ENCODE measurements at regions of chr19 and their contacts with region 1.

Region 1: DNA sequence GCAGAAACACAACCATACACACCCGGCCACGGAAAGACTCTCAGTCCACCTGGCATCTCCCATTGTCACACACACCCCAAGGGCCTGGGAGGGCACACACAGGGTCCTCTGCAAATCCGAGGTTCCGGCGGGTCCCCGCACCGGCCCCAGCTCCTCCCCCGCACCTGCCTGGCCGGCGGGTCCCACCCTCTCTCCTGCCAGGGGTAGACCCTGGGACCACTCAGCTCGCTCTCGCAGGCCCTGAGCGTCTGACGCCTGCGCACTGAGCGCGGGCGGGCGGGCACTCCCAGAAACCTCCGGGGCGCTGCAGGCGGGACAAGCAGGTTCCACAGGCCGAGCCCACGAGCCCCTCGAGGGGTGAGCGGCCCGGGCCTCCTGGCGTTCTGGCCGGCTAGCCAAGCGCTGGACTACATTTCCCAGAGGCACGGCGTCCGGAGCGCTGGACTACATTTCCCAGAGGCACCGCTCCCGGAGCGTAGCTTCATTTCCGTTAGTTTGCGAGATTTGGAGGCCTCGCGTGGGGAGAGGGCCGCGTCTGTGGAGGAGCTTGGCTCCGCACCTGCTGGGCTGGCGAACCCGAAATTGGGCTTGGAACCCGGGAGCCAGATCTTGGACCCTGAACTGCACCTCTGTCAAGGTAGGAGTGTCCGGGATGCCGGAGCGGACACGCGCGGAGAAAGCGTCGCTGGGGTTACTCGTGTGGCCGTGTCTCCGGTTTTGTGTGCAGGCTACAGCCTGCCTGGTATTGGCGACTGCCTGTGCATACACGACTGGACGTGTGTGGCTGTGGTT is at the start of gene ZNF420:
- DNase-seq: peak; percentile 94 to 97 (median 96)
- ATAC-seq: peak; percentile 99
- H3K4me3 ChIP-seq: peak within 1 kb of the TSS; percentile 62 to 89 (median 78)
- H3K27ac ChIP-seq: peak within 1 kb of the TSS; percentile 45 to 93 (median 86)
- H3K4me1 ChIP-seq: peaks cover 0 to 28% (median 15%) of the 10 kb centered on the region in 12 donors
- H3K27me3 ChIP-seq: no peaks in the 10 kb centered on the region
- CTCF ChIP-seq: peak in 2 of 12 donors; percentile 11 to 14
- POLR2A ChIP-seq: peak in 1 of 2 donors; percentile 64
- total RNA-seq, gene ZNF420: 1.9 to 9.3 (median 7.8) TPM

Region 2: DNA sequence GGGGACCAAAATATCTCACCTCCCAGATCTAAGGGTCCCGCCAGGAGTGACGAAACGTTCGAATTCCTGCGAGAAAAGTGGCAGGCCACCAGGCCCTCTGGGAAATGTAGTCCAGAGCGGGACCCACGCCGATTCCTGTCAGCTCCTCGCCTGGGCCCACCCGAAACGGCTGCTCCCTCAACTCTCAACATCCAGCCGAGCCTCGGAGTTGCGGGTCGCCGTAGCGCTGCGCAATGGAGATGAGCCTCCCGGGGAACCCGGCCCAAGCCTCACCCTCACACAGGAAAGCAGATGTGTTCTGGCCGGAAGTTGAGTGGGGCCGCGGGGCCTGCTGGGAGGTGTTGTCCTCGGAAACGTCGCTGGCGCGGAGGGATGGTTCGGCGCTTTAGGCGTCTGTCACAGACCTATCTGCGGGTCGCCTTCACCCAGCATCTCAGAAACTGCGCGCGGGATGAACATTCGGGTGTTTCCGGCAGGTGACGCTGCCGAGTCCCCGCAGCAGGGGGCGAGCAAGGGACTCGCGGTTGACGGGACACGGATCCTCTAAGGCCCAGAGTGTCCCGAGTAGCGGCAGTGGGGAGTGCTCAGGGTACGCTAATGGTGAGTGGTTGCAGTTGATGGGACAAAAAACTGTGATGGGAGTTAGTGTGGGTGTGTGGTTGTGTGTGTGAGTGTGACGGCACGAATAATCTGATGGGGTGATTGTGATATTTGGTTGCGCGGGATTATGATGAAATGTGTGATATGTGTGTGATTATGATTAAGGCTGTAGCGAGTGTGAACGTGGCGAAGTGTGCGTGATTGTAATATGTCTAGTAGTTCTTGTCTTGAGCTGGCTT is 161.9 kb before region 1 on chr19 and contains the starts of genes ZNF568 and ZNF829:
- intact Hi-C with region 1: loop called in 1 of 10 experiments (anchors 5 kb)
- DNase-seq: peak; percentile 91 to 95 (median 93)
- ATAC-seq: peak; percentile 94 to 99 (median 98)
- H3K4me3 ChIP-seq: peak within 1 kb of the TSS; percentile 60 to 87 (median 80)
- H3K27ac ChIP-seq: peak within 1 kb of the TSS; percentile 80 to 98 (median 97)
- H3K4me1 ChIP-seq: peaks cover 0 to 18% (median 11%) of the 10 kb centered on the region in 12 donors
- H3K27me3 ChIP-seq: no peaks in the 10 kb centered on the region
- CTCF ChIP-seq: peak; percentile 44 to 85 (median 61)
- POLR2A ChIP-seq: no peak
- total RNA-seq, gene ZNF568: 6.6 to 12.1 (median 9.4) TPM
- total RNA-seq, gene ZNF829: 1.3 to 3.5 (median 2.5) TPM

Region 3: DNA sequence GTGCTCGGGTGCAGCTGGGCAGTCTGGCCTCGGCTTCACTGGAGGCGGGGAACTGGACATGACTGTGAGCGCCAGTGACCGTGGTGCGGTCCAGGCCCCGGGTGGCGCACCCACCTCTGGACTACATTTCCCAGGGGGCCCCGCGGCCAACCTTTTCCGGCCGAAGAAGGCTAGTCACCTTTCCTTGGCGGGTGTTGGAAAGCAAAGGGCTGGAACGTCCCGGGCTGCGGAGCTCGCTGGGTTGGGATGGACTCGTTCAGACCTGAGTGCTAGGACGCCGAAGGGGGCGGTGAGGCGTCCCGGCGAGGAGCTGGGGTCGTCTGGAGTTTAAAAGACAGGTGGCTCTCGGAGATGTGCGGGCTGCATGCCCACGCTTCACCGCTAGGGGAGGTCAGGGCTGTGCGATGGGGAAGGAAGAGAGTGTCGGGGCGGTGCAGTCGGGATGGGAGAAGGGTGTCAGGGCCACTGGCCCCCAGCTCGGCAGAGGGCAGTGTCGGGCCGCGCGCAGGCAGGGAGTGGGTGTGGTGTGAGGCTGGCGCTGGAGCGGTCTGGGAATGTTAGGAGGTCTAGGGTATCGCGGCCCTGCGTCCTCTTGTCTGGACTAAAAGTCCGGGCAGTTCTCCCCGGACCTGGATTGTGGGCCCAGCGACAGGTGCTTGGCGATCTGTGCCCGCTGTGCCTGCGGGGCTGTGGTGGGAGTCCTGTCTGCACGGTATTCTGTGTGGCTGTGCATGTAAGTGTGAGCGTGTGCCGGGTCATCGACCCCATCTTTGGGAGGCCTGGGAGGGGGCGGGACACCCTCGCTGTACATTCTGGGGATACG is 104.9 kb before region 1 on chr19:
- intact Hi-C with region 1: loop called in 3 of 10 experiments (anchors 1 to 10 kb)
- DNase-seq: peak; percentile 88 to 94 (median 90)
- ATAC-seq: peak; percentile 99 to 100 (median 100)
- H3K4me3 ChIP-seq: peak overlapping the region; percentile 24 to 91 (median 72)
- H3K27ac ChIP-seq: peak overlapping the region in 11 of 12 donors; percentile 41 to 89 (median 78)
- H3K4me1 ChIP-seq: peaks cover 0 to 21% (median 11%) of the 10 kb centered on the region in 12 donors
- H3K27me3 ChIP-seq: no peaks in the 10 kb centered on the region
- CTCF ChIP-seq: peak; percentile 74 to 97 (median 92)
- POLR2A ChIP-seq: peak in 1 of 2 donors; percentile 28

Region 4: DNA sequence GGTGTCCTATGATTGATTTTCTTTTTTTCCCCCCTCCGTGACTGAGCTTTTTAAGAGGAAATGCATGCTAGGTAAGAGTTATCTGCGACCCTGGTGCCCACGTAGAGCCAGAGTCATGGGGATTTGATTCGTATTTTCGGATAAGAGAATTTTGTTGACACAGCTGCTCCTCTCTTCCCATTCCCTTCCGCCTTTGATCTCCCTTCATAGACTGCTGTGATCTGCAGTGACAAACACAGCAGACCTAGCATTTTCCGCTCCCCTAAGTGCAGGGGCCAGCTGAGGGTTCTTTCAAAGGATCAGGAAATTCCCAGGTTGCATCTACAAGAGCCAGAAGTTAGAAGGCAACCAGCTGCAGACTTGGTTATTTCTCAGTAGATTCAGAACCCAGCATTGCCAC is 91.5 kb before region 1 on chr19:
- intact Hi-C with region 1: no loop called
- DNase-seq: no peak
- ATAC-seq: no peak
- H3K4me3 ChIP-seq: no peak overlapping the region
- H3K27ac ChIP-seq: no peak overlapping the region
- H3K4me1 ChIP-seq: no peaks in the 10 kb centered on the region
- H3K27me3 ChIP-seq: no peaks in the 10 kb centered on the region
- CTCF ChIP-seq: no peak
- POLR2A ChIP-seq: no peak

Region 5: GRCh38 chr19:37007587-37008220 is 70.4 kb before region 1 on chr19:
- intact Hi-C with region 1: loop called in 2 of 10 experiments (anchors 1 to 5 kb)
- DNase-seq: peak; percentile 74 to 90 (median 88)
- ATAC-seq: peak; percentile 59 to 97 (median 92)
- H3K4me3 ChIP-seq: peak overlapping the region; percentile 30 to 88 (median 62)
- H3K27ac ChIP-seq: peak overlapping the region in 11 of 12 donors; percentile 16 to 72 (median 52)
- H3K4me1 ChIP-seq: peaks cover 0 to 11% (median 0%) of the 10 kb centered on the region in 12 donors
- H3K27me3 ChIP-seq: no peaks in the 10 kb centered on the region
- CTCF ChIP-seq: peak in 1 of 12 donors; percentile 9
- POLR2A ChIP-seq: no peak

Region 6: GRCh38 chr19:37136111-37136510 is 58.0 kb after region 1 on chr19:
- intact Hi-C with region 1: no loop called
- DNase-seq: no peak
- ATAC-seq: no peak
- H3K4me3 ChIP-seq: no peak overlapping the region
- H3K27ac ChIP-seq: no peak overlapping the region
- H3K4me1 ChIP-seq: no peaks in the 10 kb centered on the region
- H3K27me3 ChIP-seq: no peaks in the 10 kb centered on the region
- CTCF ChIP-seq: no peak
- POLR2A ChIP-seq: no peak

Region 7: DNA sequence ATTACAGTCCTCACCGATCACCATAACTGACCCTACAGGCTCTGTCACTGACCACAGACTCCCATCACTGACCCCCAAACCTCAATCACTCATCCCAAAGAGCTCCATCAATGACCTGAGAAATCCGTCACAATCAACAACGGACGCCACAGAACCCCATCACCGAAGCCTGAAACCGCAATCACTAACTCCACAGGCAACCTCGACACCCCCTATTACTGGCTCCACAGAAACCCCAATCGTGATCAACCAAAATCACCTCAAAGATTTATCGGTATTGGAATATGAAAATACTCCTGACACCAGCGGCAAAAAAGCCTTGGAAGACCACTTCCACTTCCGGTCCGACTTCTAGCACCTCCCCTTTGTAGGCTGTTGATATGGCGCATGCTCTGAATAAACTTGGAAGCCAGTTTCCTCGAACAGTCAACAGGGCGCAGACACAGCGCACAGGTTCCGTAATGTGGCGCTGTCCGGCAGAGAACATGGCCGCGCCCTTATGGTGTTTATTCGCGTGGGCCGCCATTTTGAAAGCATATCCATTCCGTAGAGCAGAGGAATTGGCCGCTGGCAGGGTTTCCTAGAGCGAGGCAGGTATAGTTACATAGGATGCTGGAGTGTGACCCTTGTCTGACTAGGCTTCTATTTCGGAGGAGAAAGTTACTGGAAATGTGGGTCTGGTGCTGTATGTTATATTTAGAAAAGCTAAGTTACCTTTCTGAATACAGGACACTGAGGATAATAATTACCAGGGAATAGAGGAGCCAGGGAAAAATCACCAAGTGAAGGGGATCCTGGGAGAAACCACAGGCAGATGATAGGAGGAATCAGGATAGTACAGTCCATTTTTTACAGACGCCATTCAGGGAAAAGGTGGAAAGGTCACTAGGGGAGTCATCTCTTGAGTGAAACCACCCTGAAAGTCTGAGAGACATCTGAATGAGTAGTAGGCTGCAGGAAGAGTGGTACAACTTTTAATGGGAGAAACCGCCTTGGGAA is 94.5 kb after region 1 on chr19 and contains the start of gene ZNF585A:
- intact Hi-C with region 1: loop called in 3 of 10 experiments (anchors 1 to 5 kb)
- DNase-seq: peak; percentile 93 to 95 (median 93)
- ATAC-seq: peak; percentile 100
- H3K4me3 ChIP-seq: peak within 1 kb of the TSS; percentile 49 to 81 (median 68)
- H3K27ac ChIP-seq: peak within 1 kb of the TSS in 11 of 12 donors; percentile 6 to 82 (median 67)
- H3K4me1 ChIP-seq: peaks cover 0 to 14% (median 7%) of the 10 kb centered on the region in 12 donors
- H3K27me3 ChIP-seq: no peaks in the 10 kb centered on the region
- CTCF ChIP-seq: peak in 7 of 12 donors; percentile 21 to 59 (median 34)
- POLR2A ChIP-seq: peak in 1 of 2 donors; percentile 32
- total RNA-seq, gene ZNF585A: 6.5 to 14.8 (median 11.3) TPM